B cell (primary cell): ENCODE measurements at regions of chr12 and their contacts with region 1.

Region 1: DNA sequence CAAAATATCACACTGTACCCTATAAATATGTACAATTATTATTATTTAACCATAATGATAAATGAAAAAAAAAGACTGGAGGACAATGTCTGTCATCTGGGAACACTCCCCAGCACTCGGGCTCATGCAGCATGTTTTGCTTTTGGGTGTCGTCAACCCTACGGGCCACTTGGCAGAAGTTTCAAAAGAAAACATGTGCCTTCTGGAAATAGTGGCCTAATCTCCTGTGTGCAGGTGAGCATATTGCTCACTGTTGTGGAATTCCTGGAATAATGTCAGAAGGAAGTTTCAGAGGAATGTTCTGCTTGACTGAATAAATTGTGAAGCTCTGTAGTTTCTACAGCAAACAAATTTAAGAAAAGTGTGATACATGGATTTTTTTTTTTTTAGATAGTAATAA is 298.3 kb downstream of the SSPN start:
- DNase-seq: no peak
- ATAC-seq: no peak
- H3K4me3 ChIP-seq: no peak overlapping the region
- H3K4me3 Mint-ChIP-seq: no peak overlapping the region
- H3K27ac ChIP-seq: no peak overlapping the region
- H3K27ac Mint-ChIP-seq: no peak overlapping the region
- H3K4me1 ChIP-seq: no peaks in the 10 kb centered on the region
- H3K4me1 Mint-ChIP-seq: peaks cover 3% of the 10 kb centered on the region
- H3K27me3 ChIP-seq: no peaks in the 10 kb centered on the region
- H3K27me3 Mint-ChIP-seq: no peaks in the 10 kb centered on the region
- CTCF ChIP-seq: no peak

Region 2: DNA sequence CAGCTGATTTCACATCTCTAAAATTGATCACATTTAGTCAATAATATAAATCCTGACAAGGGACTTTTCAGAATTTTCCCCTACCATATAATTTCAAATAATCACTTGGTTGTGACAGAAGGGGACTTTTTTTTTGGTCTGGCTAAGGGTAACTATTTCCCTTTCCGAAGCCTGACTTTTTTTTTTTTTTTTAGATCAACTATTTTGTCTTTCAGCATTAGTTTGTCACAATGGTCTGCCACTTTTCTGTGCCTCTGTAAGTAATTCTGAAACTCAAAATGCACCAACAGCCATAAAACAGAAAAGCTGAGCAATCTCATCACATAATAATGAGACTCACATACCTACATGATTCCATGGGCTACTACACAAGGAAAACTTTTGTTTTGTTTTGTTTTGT is 31.9 kb before region 1 on chr12:
- CTCF ChIA-PET with region 1: no interaction called
- POLR2A ChIA-PET with region 1: interaction called, 10 read pairs
- intact Hi-C with region 1: loop called (anchors 5 kb)
- DNase-seq: no peak
- ATAC-seq: no peak
- H3K4me3 ChIP-seq: no peak overlapping the region
- H3K4me3 Mint-ChIP-seq: no peak overlapping the region
- H3K27ac ChIP-seq: no peak overlapping the region
- H3K27ac Mint-ChIP-seq: no peak overlapping the region
- H3K4me1 ChIP-seq: peaks cover 6 to 11% of the 10 kb centered on the region in 2 donors
- H3K4me1 Mint-ChIP-seq: peaks cover 15% of the 10 kb centered on the region
- H3K27me3 ChIP-seq: no peaks in the 10 kb centered on the region
- H3K27me3 Mint-ChIP-seq: no peaks in the 10 kb centered on the region
- CTCF ChIP-seq: no peak